ENCODE measurements at regions of chr9 and their contacts with region 1.

Region 1: GRCh38 chr9:70053864-70054263 is 10.2 kb downstream of the MAMDC2 start:
- DNase-seq: no peak
- ATAC-seq: peak in 1 of 8 donors; percentile 41
- H3K4me3 ChIP-seq: no peak overlapping the region
- H3K27ac ChIP-seq: peak overlapping the region in 1 of 10 donors; percentile 22
- H3K4me1 ChIP-seq: peaks cover 1 to 88% (median 32%) of the 10 kb centered on the region in 9 donors
- H3K27me3 ChIP-seq: no peaks in the 10 kb centered on the region
- CTCF ChIP-seq: no peak

Region 2: GRCh38 chr9:68631811-68632210 is 1422.1 kb before region 1 on chr9:
- intact Hi-C with region 1: no loop called
- DNase-seq: no peak
- ATAC-seq: no peak
- H3K4me3 ChIP-seq: no peak overlapping the region
- H3K27ac ChIP-seq: no peak overlapping the region
- H3K4me1 ChIP-seq: peaks cover 0 to 7% (median 0%) of the 10 kb centered on the region in 9 donors
- H3K27me3 ChIP-seq: no peaks in the 10 kb centered on the region
- CTCF ChIP-seq: no peak

Region 3: GRCh38 chr9:70111042-70111602 is 57.3 kb after region 1 on chr9:
- intact Hi-C with region 1: loop called in 2 of 10 experiments (anchors 5 to 10 kb)
- DNase-seq: peak; percentile 79 to 86
- ATAC-seq: peak in 7 of 8 donors; percentile 74 to 87 (median 81)
- H3K4me3 ChIP-seq: no peak overlapping the region
- H3K27ac ChIP-seq: peak overlapping the region in 5 of 10 donors; percentile 1 to 54 (median 13)
- H3K4me1 ChIP-seq: peaks cover 0 to 19% (median 8%) of the 10 kb centered on the region in 9 donors
- H3K27me3 ChIP-seq: no peaks in the 10 kb centered on the region
- CTCF ChIP-seq: peak; percentile 64 to 93 (median 86)